Gastrocnemius medialis (tissue), 4 donors: ENCODE measurements at regions of chr7 and their contacts with region 1.

Region 1: DNA sequence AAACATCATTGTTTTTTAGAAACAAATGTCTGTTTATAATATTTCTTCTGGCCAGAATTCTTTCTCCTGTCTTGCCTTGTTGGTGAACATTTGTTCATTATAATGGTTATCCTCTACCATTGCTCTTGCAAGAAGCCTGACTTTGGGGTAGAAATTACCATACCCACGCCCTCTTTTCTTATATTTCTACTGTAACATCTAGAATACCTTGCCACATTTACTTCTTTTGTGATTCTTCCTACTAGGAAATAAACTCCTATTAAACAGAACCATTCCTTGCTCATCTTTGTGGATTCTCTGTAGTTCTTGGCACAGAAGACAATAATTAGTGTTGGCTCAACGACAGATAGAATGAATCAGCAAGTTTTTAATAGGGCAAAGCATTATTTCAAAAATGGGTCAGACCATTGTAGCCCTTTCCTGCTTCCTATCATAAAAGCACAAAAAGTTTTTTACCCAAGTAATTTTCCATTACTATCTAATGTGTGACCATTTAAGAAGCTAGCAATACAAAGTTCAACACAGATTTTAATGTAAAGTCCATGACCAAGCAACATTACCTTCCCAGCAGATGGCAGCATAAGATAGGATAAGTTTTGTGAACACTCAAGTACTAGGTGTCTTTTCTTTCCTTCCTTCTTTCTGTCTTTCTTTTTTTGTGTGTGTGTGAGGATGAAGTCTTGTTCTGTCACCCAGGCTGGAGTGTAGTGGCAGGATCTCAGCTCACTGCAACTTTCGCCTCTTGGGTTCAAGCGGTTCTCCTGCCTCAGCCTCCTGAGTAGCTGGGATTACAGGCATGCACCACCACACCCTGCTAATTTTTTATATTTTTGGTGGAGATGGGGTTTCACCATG is 270.4 kb downstream of the HGF start:
- DNase-seq: no peak
- ATAC-seq: peak; percentile 89 to 97
- H3K4me3 ChIP-seq: no peak overlapping the region
- H3K27ac ChIP-seq: peak overlapping the region in 3 of 4 donors; percentile 5 to 28 (median 19)
- H3K4me1 ChIP-seq: peaks cover 5 to 13% of the 10 kb centered on the region in 2 donors
- H3K27me3 ChIP-seq: no peaks in the 10 kb centered on the region
- CTCF ChIP-seq: peak; percentile 42 to 67 (median 57)
- POLR2A ChIP-seq: no peak

Region 2: DNA sequence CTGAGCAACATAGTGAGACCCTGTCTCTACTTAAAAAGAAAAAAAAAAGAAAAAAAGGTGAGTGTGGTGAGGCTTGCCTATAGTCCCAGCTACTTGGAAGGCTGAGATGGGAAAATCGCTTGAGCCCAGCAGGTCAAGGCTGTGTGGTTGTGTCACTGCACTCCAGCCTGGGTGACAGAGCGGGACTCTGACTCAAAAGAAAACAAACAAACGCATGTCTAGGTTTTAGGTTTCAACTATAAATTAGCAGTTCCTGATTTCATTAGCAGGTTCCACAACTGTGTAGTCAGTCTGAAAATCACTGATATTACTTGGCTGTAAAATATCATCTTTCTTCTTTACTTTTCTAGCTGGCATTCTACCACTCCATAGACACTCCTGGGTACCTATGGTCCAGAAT is 426.0 kb after region 1 on chr7:
- in situ Hi-C with region 1: no loop called
- intact Hi-C with region 1: no loop called
- DNase-seq: no peak
- ATAC-seq: no peak
- H3K4me3 ChIP-seq: no peak overlapping the region
- H3K27ac ChIP-seq: no peak overlapping the region
- H3K4me1 ChIP-seq: no peaks in the 10 kb centered on the region
- H3K27me3 ChIP-seq: no peaks in the 10 kb centered on the region
- CTCF ChIP-seq: no peak
- POLR2A ChIP-seq: no peak

Region 3: GRCh38 chr7:81956520-81956919 is 457.0 kb after region 1 on chr7:
- in situ Hi-C with region 1: loop called in 2 of 4 experiments (anchors 25 kb)
- intact Hi-C with region 1: loop called (anchors 10 kb)
- DNase-seq: no peak
- ATAC-seq: peak in 1 of 2 donors; percentile 38
- H3K4me3 ChIP-seq: no peak overlapping the region
- H3K27ac ChIP-seq: no peak overlapping the region
- H3K4me1 ChIP-seq: peaks cover 8 to 18% of the 10 kb centered on the region in 2 donors
- H3K27me3 ChIP-seq: no peaks in the 10 kb centered on the region
- CTCF ChIP-seq: no peak
- POLR2A ChIP-seq: no peak

Region 4: GRCh38 chr7:82017334-82017943 is 518.0 kb after region 1 on chr7:
- in situ Hi-C with region 1: no loop called
- intact Hi-C with region 1: loop called (anchors 10 kb)
- DNase-seq: no peak
- ATAC-seq: no peak
- H3K4me3 ChIP-seq: no peak overlapping the region
- H3K27ac ChIP-seq: no peak overlapping the region
- H3K4me1 ChIP-seq: peaks cover 6% of the 10 kb centered on the region in 2 donors
- H3K27me3 ChIP-seq: no peaks in the 10 kb centered on the region
- CTCF ChIP-seq: peak in 2 of 5 experiments; percentile 21 to 26
- POLR2A ChIP-seq: no peak

Region 5: GRCh38 chr7:82572195-82572880 is 1072.8 kb after region 1 on chr7:
- in situ Hi-C with region 1: loop called in 3 of 4 experiments (anchors 25 kb)
- intact Hi-C with region 1: loop called (anchors 10 kb)
- DNase-seq: peak; percentile 61 to 74
- ATAC-seq: peak; percentile 88 to 93
- H3K4me3 ChIP-seq: peak overlapping the region in 2 of 4 donors; percentile 19 to 24
- H3K27ac ChIP-seq: no peak overlapping the region
- H3K4me1 ChIP-seq: peaks cover 0 to 11% of the 10 kb centered on the region in 2 donors
- H3K27me3 ChIP-seq: no peaks in the 10 kb centered on the region
- CTCF ChIP-seq: peak; percentile 83 to 94 (median 87)
- POLR2A ChIP-seq: no peak

Region 6: DNA sequence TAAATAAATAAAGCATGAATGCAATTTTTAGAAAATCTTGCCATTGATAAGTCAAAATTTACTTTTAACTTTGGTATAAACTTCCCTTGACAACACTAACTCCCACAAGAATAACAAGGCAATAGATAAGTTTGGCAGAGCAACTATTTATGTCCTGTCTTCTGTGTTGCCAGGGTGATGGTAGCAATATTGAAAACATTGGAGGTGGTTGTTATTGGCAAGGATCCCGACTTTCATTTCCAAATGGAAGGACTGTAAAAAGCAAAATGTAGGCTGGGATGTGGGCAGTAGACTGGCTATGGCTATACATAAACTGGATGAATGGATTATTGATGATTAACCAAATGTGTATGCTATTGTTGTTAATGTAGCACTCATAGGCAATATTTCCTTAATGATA is 1078.9 kb after region 1 on chr7:
- in situ Hi-C with region 1: loop called in 3 of 4 experiments (anchors 25 kb)
- intact Hi-C with region 1: loop called (anchors 10 kb)
- DNase-seq: no peak
- ATAC-seq: no peak
- H3K4me3 ChIP-seq: no peak overlapping the region
- H3K27ac ChIP-seq: no peak overlapping the region
- H3K4me1 ChIP-seq: no peaks in the 10 kb centered on the region
- H3K27me3 ChIP-seq: no peaks in the 10 kb centered on the region
- CTCF ChIP-seq: no peak
- POLR2A ChIP-seq: no peak